ENCODE measurements at regions of chr17 and their contacts with region 1.

Region 1: DNA sequence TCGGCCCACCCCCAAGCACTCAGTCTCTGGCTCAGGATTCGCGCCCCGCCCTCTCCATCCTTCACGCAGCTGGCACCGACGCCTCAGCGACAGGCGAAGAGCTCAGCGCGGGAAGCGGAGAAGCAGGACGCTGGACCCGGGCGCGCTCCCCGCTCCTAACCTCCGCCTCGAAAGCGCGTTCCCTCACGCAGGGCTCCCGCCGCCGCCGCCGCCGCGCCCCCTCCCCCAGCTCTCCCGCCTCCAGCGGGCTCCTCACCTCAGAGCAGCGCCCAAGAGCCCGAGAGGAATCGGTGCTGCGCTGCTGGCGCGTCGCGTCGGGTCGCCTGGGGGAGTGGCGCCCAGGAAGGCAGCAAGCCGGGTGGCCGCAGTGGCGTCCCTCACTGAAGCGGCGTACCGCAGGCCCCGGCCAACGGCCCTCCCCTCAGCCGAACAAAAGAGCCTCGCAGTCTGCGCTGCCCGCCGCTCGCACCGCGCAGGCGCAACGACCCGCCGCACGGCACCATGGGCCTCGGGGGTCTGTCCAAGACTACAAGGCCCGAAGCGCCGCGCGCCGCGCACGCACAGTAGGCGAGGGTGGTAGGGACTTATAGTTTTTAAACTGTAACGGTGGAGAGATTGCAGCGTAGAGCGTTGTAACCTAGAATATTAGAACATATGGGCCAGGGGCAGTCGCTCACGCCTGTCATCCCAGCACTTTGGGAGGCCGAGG is at the start of gene CBX1:
- DNase-seq: peak; percentile 84 to 96 (median 94)
- ATAC-seq: peak; percentile 96
- H3K4me3 ChIP-seq: peak within 1 kb of the TSS; percentile 65 to 91
- H3K4me3 Mint-ChIP-seq: peak within 1 kb of the TSS; percentile 89
- H3K27ac ChIP-seq: peak within 1 kb of the TSS; percentile 24 to 50
- H3K27ac Mint-ChIP-seq: peak within 1 kb of the TSS; percentile 79
- H3K4me1 ChIP-seq: peaks cover 21% of the 10 kb centered on the region
- H3K4me1 Mint-ChIP-seq: peaks cover 37% of the 10 kb centered on the region
- H3K27me3 ChIP-seq: no peaks in the 10 kb centered on the region
- H3K27me3 Mint-ChIP-seq: no peaks in the 10 kb centered on the region
- CTCF ChIP-seq: no peak
- total RNA-seq, gene CBX1: 5.4 to 6.6 TPM

Region 2: DNA sequence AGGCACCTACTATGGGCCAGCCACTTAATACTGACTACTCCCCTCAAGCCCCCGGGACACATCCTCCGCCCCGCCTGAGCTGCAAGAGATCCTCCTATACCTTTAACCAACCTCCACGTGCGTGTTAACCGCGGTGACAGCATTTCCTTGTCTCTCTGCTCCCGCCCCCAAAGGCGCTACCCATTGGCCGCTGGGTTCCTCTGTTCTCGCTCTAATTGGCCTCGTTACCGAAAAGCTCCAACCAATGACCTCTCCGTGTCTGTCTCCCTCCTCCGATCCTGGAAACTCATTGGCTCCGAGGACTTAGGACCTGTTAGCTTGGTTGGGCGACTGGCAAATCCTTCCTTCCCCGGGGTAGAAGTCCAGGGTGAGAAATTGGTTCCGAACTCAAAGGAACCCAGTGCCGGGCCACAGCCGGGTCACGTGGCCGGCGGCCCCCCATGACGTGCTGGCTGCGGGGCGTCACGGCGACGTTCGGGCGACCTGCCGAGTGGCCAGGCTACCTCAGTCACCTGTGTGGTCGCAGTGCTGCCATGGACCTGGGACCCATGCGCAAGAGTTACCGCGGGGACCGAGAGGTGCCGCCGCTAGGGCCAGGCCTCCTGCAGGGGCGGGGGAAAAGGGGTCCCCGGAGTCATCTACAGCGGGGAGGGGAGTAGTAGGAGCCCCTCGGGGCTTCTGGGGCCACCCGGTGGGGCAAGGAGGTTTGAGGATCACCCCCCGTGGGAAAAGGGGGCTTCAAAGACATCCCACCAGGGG is 159.8 kb before region 1 on chr17 and contains the start of gene PNPO:
- CTCF ChIA-PET with region 1: no interaction called
- POLR2A ChIA-PET with region 1: no interaction called
- intact Hi-C with region 1: loop called (anchors 5 to 10 kb)
- DNase-seq: peak; percentile 82 to 98 (median 92)
- ATAC-seq: peak; percentile 97
- H3K4me3 ChIP-seq: peak within 1 kb of the TSS; percentile 72 to 92
- H3K4me3 Mint-ChIP-seq: peak within 1 kb of the TSS; percentile 86
- H3K27ac ChIP-seq: peak within 1 kb of the TSS; percentile 57 to 88
- H3K27ac Mint-ChIP-seq: peak within 1 kb of the TSS; percentile 87
- H3K4me1 ChIP-seq: peaks cover 47% of the 10 kb centered on the region
- H3K4me1 Mint-ChIP-seq: peaks cover 54% of the 10 kb centered on the region
- H3K27me3 ChIP-seq: no peaks in the 10 kb centered on the region
- H3K27me3 Mint-ChIP-seq: no peaks in the 10 kb centered on the region
- CTCF ChIP-seq: no peak
- total RNA-seq, gene PNPO: 5.7 to 5.8 TPM